Activated CD8-positive, alpha-beta T cell treated with anti-CD3 and anti-CD28 coated beads for 36 hours (primary cell): ENCODE measurements at regions of chr2 and their contacts with region 1.

Region 1: DNA sequence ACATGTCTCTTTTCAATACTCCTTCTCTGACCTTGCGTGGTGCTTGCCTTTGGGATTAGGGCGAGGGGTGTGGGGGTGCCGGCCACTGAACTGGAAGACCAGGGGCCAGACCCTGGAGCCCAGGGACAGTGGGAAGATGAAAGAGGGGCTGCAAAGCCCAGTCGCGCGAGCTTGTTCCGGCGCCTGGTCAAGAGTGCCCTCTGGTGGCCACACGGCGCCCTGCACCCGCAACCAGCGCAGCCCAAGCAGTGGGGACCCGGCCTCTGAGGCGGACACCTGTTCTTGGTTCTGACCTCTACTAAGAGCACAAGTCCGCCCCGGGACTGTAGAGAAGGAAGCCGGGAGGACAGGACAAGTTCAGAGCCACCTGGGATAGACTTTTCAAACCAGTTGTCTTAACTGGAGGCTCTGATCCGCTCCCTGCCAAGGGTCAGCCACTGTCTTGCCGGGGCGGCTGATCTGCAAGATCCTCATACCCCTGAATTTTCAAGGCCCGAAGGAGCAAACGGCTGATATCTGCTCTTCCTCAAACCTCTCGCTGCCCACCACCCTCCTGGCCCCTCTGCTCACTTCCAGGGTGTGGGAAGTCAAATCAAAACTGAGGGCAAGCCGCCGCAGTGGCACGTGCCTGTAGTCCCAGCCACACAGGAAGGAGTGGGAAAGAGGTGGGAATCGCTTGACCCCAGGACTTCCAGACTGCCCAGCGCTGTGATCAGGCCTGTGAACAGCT is 14.9 kb upstream of the MSH6 start:
- DNase-seq: peak; percentile 75
- ATAC-seq: peak; percentile 94
- H3K4me3 Mint-ChIP-seq: no peak overlapping the region
- H3K27ac Mint-ChIP-seq: no peak overlapping the region
- H3K4me1 Mint-ChIP-seq: peaks cover 4% of the 10 kb centered on the region
- H3K27me3 Mint-ChIP-seq: peaks cover 1% of the 10 kb centered on the region
- CTCF ChIP-seq: peak; percentile 99

Region 2: DNA sequence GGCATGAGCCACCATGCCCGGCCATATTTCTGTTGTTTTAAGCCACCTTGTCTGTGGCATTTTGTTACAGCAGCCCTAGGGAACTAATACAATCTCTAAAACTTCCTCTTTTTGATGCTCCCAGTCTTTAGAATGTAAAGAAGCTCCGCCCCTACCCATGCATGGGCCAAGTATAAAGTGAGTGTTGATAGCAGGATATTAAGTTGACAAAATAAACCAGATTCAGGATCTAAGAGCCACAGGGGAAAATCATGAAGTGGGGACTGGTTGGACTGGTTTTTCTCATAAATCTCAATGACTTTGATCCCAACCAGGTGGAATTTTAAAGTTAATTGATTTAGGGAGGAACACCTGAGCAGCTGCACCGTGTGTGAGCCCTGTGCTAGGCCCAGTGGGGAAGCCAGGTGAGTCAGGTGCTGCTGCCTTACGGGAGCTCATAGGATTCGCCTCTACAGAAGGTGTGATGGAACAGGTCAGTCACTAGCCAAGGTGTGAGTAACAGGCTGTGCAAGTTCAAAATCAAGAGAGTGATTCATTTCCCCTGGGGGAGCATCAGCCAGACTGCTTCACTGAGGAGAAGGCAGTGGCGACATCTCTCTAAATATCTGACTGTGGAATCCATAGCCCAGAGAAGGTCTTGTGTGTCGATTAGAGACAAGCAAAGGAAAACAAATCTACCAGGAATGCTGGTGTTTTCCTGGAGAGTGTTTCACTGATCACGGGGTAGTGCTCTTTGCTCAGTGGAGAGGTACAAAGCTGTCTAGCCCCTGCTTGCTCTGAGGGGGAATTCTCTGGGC is 428.1 kb before region 1 on chr2:
- CTCF ChIA-PET with region 1: interaction called, 61 read pairs
- POLR2A ChIA-PET with region 1: no interaction called
- intact Hi-C with region 1: loop called (anchors 10 kb)
- DNase-seq: peak; percentile 23
- ATAC-seq: peak; percentile 74
- H3K4me3 Mint-ChIP-seq: no peak overlapping the region
- H3K27ac Mint-ChIP-seq: no peak overlapping the region
- H3K4me1 Mint-ChIP-seq: peaks cover 2% of the 10 kb centered on the region
- H3K27me3 Mint-ChIP-seq: peaks cover 8% of the 10 kb centered on the region
- CTCF ChIP-seq: no peak

Region 3: DNA sequence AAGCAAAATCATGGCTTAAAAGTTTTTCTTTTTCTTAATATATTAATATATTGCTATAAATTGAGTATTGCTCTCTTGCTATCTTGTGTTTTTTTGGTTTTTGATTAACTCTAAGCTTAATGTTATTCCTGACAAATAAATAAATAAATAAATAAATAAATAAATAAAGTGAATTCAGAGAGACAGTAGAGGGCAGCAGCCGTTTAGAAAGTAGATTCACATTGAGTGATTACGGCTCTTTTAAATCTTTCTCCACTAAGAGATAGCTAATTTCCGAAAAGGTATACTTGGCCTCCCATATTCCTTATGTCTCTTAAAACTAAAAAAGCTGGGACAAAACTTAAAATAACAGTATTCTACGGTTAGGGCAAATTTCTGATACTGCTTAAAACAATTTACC is 330.8 kb before region 1 on chr2:
- CTCF ChIA-PET with region 1: interaction called, 12 read pairs
- POLR2A ChIA-PET with region 1: no interaction called
- intact Hi-C with region 1: loop called (anchors 10 kb)
- DNase-seq: no peak
- ATAC-seq: no peak
- H3K4me3 Mint-ChIP-seq: no peak overlapping the region
- H3K27ac Mint-ChIP-seq: no peak overlapping the region
- H3K4me1 Mint-ChIP-seq: no peaks in the 10 kb centered on the region
- H3K27me3 Mint-ChIP-seq: no peaks in the 10 kb centered on the region
- CTCF ChIP-seq: peak; percentile 24

Region 4: GRCh38 chr2:47751875-47752357 is 16.1 kb before region 1 on chr2:
- CTCF ChIA-PET with region 1: interaction called, 20 read pairs
- POLR2A ChIA-PET with region 1: no interaction called
- intact Hi-C with region 1: no loop called
- DNase-seq: no peak
- ATAC-seq: peak; percentile 22
- H3K4me3 Mint-ChIP-seq: no peak overlapping the region
- H3K27ac Mint-ChIP-seq: no peak overlapping the region
- H3K4me1 Mint-ChIP-seq: peaks cover 5% of the 10 kb centered on the region
- H3K27me3 Mint-ChIP-seq: no peaks in the 10 kb centered on the region
- CTCF ChIP-seq: no peak

Region 5: GRCh38 chr2:47782671-47783485 is 14.8 kb after region 1 on chr2 and contains the start of gene MSH6:
- CTCF ChIA-PET with region 1: interaction called, 42 read pairs
- POLR2A ChIA-PET with region 1: interaction called, 4 read pairs
- intact Hi-C with region 1: no loop called
- DNase-seq: peak; percentile 88
- ATAC-seq: peak; percentile 92
- H3K4me3 Mint-ChIP-seq: peak within 1 kb of the TSS; percentile 88
- H3K27ac Mint-ChIP-seq: peak within 1 kb of the TSS; percentile 91
- H3K4me1 Mint-ChIP-seq: peaks cover 16% of the 10 kb centered on the region
- H3K27me3 Mint-ChIP-seq: no peaks in the 10 kb centered on the region
- CTCF ChIP-seq: no peak
- total RNA-seq, gene MSH6: 145 to 151 TPM

Region 6: GRCh38 chr2:47819834-47820233 is 51.8 kb after region 1 on chr2:
- CTCF ChIA-PET with region 1: no interaction called
- POLR2A ChIA-PET with region 1: no interaction called
- intact Hi-C with region 1: no loop called
- DNase-seq: no peak
- ATAC-seq: no peak
- H3K4me3 Mint-ChIP-seq: no peak overlapping the region
- H3K27ac Mint-ChIP-seq: no peak overlapping the region
- H3K4me1 Mint-ChIP-seq: peaks cover 3% of the 10 kb centered on the region
- H3K27me3 Mint-ChIP-seq: no peaks in the 10 kb centered on the region
- CTCF ChIP-seq: no peak